Esophagus muscularis mucosa (tissue), 4 donors: ENCODE measurements at regions of chr21 and their contacts with region 1.

Region 1: GRCh38 chr21:32782698-32783097 is 11.1 kb upstream of the PAXBP1 start:
- DNase-seq: no peak
- H3K4me3 ChIP-seq: no peak overlapping the region
- H3K27ac ChIP-seq: no peak overlapping the region
- H3K4me1 ChIP-seq: no peaks in the 10 kb centered on the region
- H3K27me3 ChIP-seq: no peaks in the 10 kb centered on the region
- CTCF ChIP-seq: peak in 2 of 3 experiments; percentile 23 to 25
- EP300 ChIP-seq: no peak
- POLR2A ChIP-seq: no peak

Region 2: GRCh38 chr21:32826329-32827167 is 43.9 kb after region 1 on chr21:
- intact Hi-C with region 1: loop called (anchors 5 kb)
- DNase-seq: peak; percentile 87
- H3K4me3 ChIP-seq: no peak overlapping the region
- H3K27ac ChIP-seq: no peak overlapping the region
- H3K4me1 ChIP-seq: no peaks in the 10 kb centered on the region
- H3K27me3 ChIP-seq: no peaks in the 10 kb centered on the region
- CTCF ChIP-seq: peak; percentile 57 to 66 (median 63)
- EP300 ChIP-seq: no peak
- POLR2A ChIP-seq: no peak